HEK293 (cell line): ENCODE measurements at regions of chr18 and their contacts with region 1.

Region 1: GRCh38 chr18:3447895-3448837 is 1.8 kb upstream of the TGIF1 start:
- H3K4me3 ChIP-seq: peak overlapping the region; percentile 56
- H3K27ac ChIP-seq: peak overlapping the region; percentile 98
- H3K4me1 ChIP-seq: peaks cover 5% of the 10 kb centered on the region
- CTCF ChIP-seq: peak; percentile 76

Region 2: DNA sequence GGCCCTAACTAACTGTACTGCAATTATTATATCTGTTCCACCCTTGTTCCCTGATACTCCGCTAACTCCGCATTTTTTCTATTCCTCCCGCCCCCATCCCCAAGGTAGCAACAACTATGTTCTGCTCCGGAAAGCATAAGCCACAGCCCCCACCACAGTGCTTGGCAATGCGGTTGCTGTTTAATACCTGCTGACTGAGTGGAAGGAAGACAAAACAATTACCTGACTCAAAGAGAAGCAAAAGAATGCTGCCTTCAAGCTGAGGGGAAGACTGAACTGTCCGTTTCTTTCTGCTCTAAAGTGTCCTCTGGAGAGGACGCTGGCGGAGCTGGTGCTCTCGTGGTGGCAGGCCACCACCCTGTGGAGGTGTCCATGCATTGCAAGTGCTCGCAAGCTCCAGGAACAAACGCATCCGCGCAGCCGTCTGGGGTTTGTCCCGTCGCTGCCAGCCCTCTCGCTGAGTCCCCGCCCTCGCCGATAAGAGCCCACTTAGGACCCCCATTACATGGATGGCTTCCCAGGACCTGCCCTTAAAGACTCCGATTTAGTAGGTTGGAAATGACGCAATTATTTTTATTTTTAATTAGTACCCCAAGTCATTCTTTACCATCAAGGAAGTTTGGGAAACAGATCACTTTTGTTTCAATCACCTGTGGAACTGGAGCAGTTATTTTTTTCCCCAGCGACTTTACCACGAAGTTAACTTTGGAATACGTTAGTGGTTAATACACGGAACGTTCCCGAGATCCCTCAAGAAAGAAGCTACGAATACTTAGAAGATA is 202.1 kb before region 1 on chr18:
- CTCF ChIA-PET with region 1: no interaction called
- POLR2A ChIA-PET with region 1: interaction called, 11 read pairs
- H3K4me3 ChIP-seq: peak overlapping the region; percentile 34
- H3K27ac ChIP-seq: no peak overlapping the region
- H3K4me1 ChIP-seq: peaks cover 9% of the 10 kb centered on the region
- CTCF ChIP-seq: peak; percentile 95

Region 3: DNA sequence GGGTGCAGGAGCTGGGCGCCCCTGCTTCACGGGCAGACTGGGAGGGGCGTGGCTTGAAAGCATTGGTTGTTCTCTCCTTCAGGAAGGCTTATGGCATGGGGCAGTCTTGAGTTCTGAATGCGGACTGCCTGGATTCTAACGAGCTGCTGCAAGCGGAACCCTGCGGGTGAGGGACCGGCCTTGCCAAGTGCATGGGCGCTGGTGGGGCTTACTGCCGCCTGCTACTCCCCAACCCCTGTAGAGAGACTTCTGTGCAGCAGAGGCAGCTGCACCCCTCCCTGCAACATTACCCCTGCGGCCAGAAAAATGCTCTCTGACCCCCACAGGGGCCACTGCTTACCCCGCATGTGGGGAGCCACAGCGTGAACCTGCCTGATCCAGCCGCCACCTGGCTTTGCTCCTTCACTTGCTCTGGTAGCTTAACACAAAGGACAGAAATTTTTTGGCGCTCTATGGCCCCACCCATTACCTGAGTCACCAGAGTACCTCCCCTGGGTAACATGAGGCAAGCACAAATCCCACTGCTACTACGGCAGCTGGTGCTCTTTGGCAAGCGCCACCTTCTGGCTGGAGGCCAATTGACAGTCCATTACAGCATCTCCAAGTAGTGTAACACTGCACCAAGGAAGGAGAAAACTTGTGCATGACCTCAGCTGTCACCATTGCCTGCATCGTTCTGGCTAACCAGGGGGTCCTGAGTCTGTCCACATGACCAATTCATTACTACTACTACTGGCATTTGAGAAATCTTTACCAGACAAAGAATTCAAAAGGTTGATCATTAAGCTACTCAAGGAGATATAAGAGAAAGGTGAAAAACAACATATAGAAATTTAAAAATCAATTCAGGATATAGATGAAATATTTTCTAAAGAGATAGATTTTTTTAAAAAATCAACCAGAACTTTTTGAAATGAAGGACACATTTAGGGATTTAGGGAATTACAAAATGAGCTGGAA is 150.9 kb before region 1 on chr18:
- CTCF ChIA-PET with region 1: interaction called, 16 read pairs
- POLR2A ChIA-PET with region 1: interaction called, 26 read pairs
- H3K4me3 ChIP-seq: peak overlapping the region; percentile 59
- H3K27ac ChIP-seq: peak overlapping the region; percentile 85
- H3K4me1 ChIP-seq: peaks cover 4% of the 10 kb centered on the region; the same call in 1 of the 2 replicates
- CTCF ChIP-seq: peak; percentile 91

Region 4: GRCh38 chr18:3409811-3410210 is 38.4 kb before region 1 on chr18:
- CTCF ChIA-PET with region 1: interaction called, 4 read pairs
- POLR2A ChIA-PET with region 1: interaction called, 14 read pairs
- H3K4me3 ChIP-seq: no peak overlapping the region
- H3K27ac ChIP-seq: peak overlapping the region; percentile 52; the same call in 1 of the 2 replicates
- H3K4me1 ChIP-seq: peaks cover 8% of the 10 kb centered on the region
- CTCF ChIP-seq: no peak

Region 5: DNA sequence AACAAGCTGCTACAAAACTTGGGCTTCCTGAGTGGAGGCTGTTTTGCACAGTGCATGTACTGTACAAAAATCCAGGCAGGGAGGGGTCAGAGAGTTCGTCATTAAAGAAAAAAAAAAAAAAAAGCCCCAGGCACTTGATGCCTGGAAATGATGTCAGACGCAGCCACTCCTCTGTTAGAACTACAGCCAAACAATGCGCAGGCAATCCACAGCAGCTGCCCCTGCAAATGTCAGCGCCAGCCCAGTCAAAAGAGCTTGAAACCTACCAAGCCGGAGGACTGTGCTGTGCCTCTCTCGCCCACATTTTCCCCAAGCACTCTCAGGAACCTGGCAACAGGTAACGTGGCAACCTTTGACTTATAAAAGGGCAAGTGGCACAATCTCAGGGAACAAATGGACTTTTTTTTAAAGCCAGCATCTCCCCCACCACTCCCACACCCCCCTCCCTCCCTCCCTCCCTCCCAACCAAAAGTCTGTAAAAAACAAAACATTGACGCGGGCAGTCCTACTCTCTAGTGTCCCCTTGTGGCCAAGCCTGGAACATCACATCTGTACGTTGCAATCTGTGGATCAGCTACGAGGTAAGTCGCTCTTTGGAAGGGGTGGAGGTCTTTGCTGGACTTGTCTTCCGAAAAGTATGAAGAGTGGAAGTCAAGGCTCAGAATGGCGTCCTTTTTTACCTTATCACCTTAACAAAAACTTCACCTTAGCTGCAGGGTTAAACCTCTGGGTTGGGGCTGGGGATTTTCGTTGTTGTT is 145.9 kb after region 1 on chr18:
- CTCF ChIA-PET with region 1: interaction called, 3 read pairs
- POLR2A ChIA-PET with region 1: interaction called, 31 read pairs
- H3K4me3 ChIP-seq: peak overlapping the region; percentile 39
- H3K27ac ChIP-seq: peak overlapping the region; percentile 97
- H3K4me1 ChIP-seq: peaks cover 23% of the 10 kb centered on the region
- CTCF ChIP-seq: peak; percentile 58